Left ventricle myocardium superior (tissue), 1 donor: ENCODE measurements at regions of chr10 and their contacts with region 1.

Region 1: GRCh38 chr10:14195433-14195832 is 135.3 kb downstream of the FRMD4A start:
- DNase-seq: no peak
- ATAC-seq: no peak

Region 2: GRCh38 chr10:14478604-14479003 is 283.2 kb after region 1 on chr10:
- intact Hi-C with region 1: loop called (anchors 5 kb)
- DNase-seq: peak; percentile 77
- ATAC-seq: peak; percentile 86